ENCODE measurements at regions of chr15 and their contacts with region 1.

Region 1: GRCh38 chr15:78149068-78149804 is at the start of gene IDH3A:
- DNase-seq: peak; percentile 71
- ATAC-seq: peak; percentile 98
- H3K4me3 ChIP-seq: peak within 1 kb of the TSS; percentile 64 to 87
- H3K27ac ChIP-seq: peak within 1 kb of the TSS; percentile 93
- H3K4me1 ChIP-seq: peaks cover 13% of the 10 kb centered on the region
- H3K27me3 ChIP-seq: no peaks in the 10 kb centered on the region
- CTCF ChIP-seq: no peak
- total RNA-seq, gene IDH3A: 116 TPM

Region 2: GRCh38 chr15:78082106-78083078 is 66.8 kb before region 1 on chr15:
- CTCF ChIA-PET with region 1: no interaction called
- POLR2A ChIA-PET with region 1: interaction called, 10 read pairs
- in situ Hi-C with region 1: no loop called
- intact Hi-C with region 1: no loop called
- DNase-seq: no peak
- ATAC-seq: peak; percentile 25; the same call in 1 of the 2 replicates
- H3K4me3 ChIP-seq: no peak overlapping the region
- H3K27ac ChIP-seq: 0 out of 2 replicates have a peak overlapping the region, but pooled peaks have one; percentile 3
- H3K4me1 ChIP-seq: no peaks in the 10 kb centered on the region
- H3K27me3 ChIP-seq: no peaks in the 10 kb centered on the region
- CTCF ChIP-seq: no peak

Region 3: GRCh38 chr15:78193731-78194567 is 44.7 kb after region 1 on chr15:
- CTCF ChIA-PET with region 1: no interaction called
- POLR2A ChIA-PET with region 1: no interaction called
- in situ Hi-C with region 1: no loop called
- intact Hi-C with region 1: no loop called
- DNase-seq: no peak
- ATAC-seq: no peak
- H3K4me3 ChIP-seq: no peak overlapping the region
- H3K27ac ChIP-seq: no peak overlapping the region
- H3K4me1 ChIP-seq: no peaks in the 10 kb centered on the region
- H3K27me3 ChIP-seq: no peaks in the 10 kb centered on the region
- CTCF ChIP-seq: no peak

Region 4: GRCh38 chr15:78264304-78265136 is 115.3 kb after region 1 on chr15 and contains the start of gene DNAJA4:
- CTCF ChIA-PET with region 1: no interaction called
- POLR2A ChIA-PET with region 1: no interaction called
- in situ Hi-C with region 1: loop called (anchors 25 kb)
- intact Hi-C with region 1: no loop called
- DNase-seq: no peak
- ATAC-seq: peak; percentile 78
- H3K4me3 ChIP-seq: peak within 1 kb of the TSS; percentile 49 to 61
- H3K27ac ChIP-seq: peak within 1 kb of the TSS; percentile 69
- H3K4me1 ChIP-seq: peaks cover 12% of the 10 kb centered on the region
- H3K27me3 ChIP-seq: no peaks in the 10 kb centered on the region
- CTCF ChIP-seq: peak; percentile 56
- total RNA-seq, gene DNAJA4: 11.1 TPM